Left cardiac atrium (tissue), 4 donors: ENCODE measurements at regions of chr1 and their contacts with region 1.

Region 1: DNA sequence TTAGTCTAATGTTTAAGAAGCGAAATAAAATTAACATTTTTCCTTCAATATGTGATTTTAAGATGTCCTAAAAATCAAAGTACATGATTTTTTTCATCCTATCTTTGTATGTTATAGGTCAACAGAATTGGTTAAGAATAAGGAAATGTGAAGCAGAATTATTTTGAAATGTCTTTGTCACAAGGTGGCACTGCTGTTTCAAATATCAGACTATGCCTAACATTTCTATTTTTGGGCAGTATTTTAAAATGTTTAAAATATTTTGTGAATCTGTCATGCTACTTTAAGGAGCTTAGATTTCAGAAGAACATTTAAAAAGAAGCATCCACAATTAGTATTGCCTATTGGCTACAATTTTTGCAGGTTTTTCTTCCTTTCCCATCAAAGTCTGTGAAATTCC is 38.7 kb downstream of the AMY1C start:
- DNase-seq: no peak
- ATAC-seq: no peak

Region 2: GRCh38 chr1:102120910-102121309 is 1667.5 kb before region 1 on chr1:
- intact Hi-C with region 1: no loop called
- DNase-seq: no peak
- ATAC-seq: no peak

Region 3: GRCh38 chr1:104132382-104132973 is 344.1 kb after region 1 on chr1:
- intact Hi-C with region 1: loop called in 1 of 2 experiments (anchors 5 kb)
- DNase-seq: no peak
- ATAC-seq: no peak